ENCODE measurements at regions of chr10 and their contacts with region 1.

Region 1: DNA sequence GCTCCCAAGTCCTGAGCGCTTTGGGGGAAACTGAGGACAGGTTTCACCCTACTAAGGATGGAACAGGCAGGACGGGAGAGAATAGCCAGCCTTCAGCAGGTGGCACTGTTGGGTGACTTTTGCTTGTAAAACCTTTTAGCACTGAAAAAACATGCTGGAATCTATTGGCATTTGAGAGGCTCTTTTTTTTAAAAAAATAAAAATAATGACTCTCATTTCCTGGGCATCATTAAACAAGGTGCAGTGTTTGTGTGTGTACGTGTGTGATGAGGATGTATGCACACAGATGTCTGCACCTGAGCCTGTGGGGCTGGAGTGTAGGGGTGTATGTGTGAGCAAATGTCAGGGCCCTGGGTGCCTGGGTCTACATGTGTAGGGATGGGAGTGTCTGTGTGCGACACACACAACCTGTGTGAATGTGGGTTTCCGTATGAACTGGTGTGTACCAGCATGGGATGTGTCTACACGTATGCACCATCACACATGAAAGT is 177.9 kb downstream of the RPS24 start:
- DNase-seq: no peak
- H3K4me3 ChIP-seq: no peak overlapping the region
- H3K27ac ChIP-seq: no peak overlapping the region
- H3K4me1 ChIP-seq: peaks cover 0 to 30% (median 22%) of the 10 kb centered on the region in 4 donors
- H3K27me3 ChIP-seq: no peaks in the 10 kb centered on the region
- CTCF ChIP-seq: peak; percentile 55 to 57

Region 2: DNA sequence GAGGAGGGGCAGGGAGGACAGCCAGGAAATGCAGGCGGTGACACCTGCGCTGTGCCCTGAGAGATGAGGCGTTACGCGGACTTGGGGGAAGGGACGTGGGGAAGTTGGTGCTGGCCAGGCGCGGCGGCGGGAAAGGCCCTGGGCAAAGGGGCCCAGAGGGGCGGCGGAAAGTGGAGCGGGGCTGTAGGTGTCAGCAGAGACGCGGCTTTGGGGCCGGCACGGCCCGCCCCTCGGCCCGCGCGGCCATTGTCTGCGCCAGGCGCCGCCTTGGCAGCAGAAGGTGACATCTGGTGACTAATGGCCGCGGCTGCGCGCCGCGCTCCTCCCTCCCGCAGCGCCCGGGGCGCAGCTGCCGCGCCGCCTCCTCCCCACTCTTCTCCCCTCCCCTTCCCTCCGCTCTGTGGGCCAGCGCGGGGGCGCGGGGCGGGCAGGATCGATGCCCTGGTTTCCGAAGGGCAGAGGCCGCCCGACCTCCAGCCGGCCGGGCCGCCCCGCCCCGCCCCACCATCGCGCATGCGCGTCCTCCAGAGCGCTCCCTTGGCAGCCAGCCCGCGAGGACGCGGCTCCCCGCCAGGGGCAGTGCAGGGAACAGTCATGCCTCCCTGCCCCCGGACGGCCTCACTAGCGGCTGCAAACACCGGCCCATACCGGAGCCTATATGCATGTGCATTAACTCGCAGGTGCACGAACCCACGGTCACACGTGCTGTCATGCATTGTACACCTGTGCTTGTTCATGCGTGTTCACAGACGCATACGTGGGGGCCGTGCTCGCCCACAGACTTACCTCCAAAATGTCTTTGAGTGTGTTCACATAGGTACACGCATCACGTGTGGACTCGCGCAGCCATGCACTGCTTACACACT is 91.6 kb after region 1 on chr10:
- intact Hi-C with region 1: loop called (anchors 5 kb)
- DNase-seq: peak; percentile 90 to 96
- H3K4me3 ChIP-seq: peak overlapping the region; percentile 60
- H3K27ac ChIP-seq: peak overlapping the region; percentile 78 to 89
- H3K4me1 ChIP-seq: peaks cover 4 to 14% (median 10%) of the 10 kb centered on the region in 4 donors
- H3K27me3 ChIP-seq: no peaks in the 10 kb centered on the region
- CTCF ChIP-seq: peak; percentile 74 to 87

Region 3: GRCh38 chr10:78335691-78336401 is 124.2 kb after region 1 on chr10:
- intact Hi-C with region 1: no loop called
- DNase-seq: peak in 1 of 2 donors; percentile 87
- H3K4me3 ChIP-seq: no peak overlapping the region
- H3K27ac ChIP-seq: peak overlapping the region; percentile 66 to 70
- H3K4me1 ChIP-seq: peaks cover 0 to 75% (median 33%) of the 10 kb centered on the region in 4 donors
- H3K27me3 ChIP-seq: no peaks in the 10 kb centered on the region
- CTCF ChIP-seq: no peak

Region 4: GRCh38 chr10:78657163-78657861 is 445.7 kb after region 1 on chr10:
- intact Hi-C with region 1: loop called (anchors 10 kb)
- DNase-seq: peak; percentile 83 to 88
- H3K4me3 ChIP-seq: no peak overlapping the region
- H3K27ac ChIP-seq: no peak overlapping the region
- H3K4me1 ChIP-seq: no peaks in the 10 kb centered on the region
- H3K27me3 ChIP-seq: no peaks in the 10 kb centered on the region
- CTCF ChIP-seq: peak; percentile 58 to 67

Measured in tibial artery (tissue), 4 donors.